ENCODE measurements at regions of chr3 and their contacts with region 1.

Region 1: GRCh38 chr3:109023656-109024254 is 70.1 kb upstream of the GUCA1C start:
- DNase-seq: peak; percentile 36 to 47
- H3K4me3 ChIP-seq: no peak overlapping the region
- H3K4me3 Mint-ChIP-seq: no peak overlapping the region
- H3K27ac Mint-ChIP-seq: no peak overlapping the region
- H3K4me1 ChIP-seq: no peaks in the 10 kb centered on the region
- H3K4me1 Mint-ChIP-seq: no peaks in the 10 kb centered on the region
- H3K27me3 ChIP-seq: no peaks in the 10 kb centered on the region
- H3K27me3 Mint-ChIP-seq: no peaks in the 10 kb centered on the region
- CTCF ChIP-seq: peak; percentile 70 to 73

Region 2: DNA sequence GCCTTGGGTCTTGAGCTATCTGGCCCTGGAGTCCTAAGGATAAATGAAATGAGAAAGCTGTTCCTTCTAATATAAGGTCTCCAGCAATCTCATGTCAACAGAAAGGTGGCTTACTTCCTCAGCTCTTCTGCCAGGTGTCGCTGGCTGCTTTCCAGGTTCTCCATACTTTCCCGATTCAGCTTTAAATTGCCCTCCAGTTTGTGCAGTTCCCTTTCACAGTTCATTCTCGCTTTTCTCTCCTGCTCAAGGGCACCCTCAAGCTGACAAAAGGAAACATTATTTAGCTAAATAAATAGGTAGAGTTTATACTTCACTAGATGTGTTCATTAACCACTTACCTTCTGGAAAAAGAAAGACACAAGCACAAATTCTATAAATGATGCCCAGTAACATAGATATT is 586.3 kb before region 1 on chr3:
- CTCF ChIA-PET with region 1: no interaction called
- POLR2A ChIA-PET with region 1: no interaction called
- intact Hi-C with region 1: no loop called
- DNase-seq: peak in 1 of 2 experiments; percentile 9
- H3K4me3 ChIP-seq: no peak overlapping the region
- H3K4me3 Mint-ChIP-seq: no peak overlapping the region
- H3K27ac Mint-ChIP-seq: no peak overlapping the region
- H3K4me1 ChIP-seq: no peaks in the 10 kb centered on the region
- H3K4me1 Mint-ChIP-seq: no peaks in the 10 kb centered on the region
- H3K27me3 ChIP-seq: no peaks in the 10 kb centered on the region
- H3K27me3 Mint-ChIP-seq: no peaks in the 10 kb centered on the region
- CTCF ChIP-seq: no peak

Region 3: GRCh38 chr3:109071350-109072142 is 47.8 kb after region 1 on chr3:
- CTCF ChIA-PET with region 1: interaction called, 15 read pairs
- POLR2A ChIA-PET with region 1: no interaction called
- intact Hi-C with region 1: loop called (anchors 1 kb)
- DNase-seq: peak in 1 of 2 experiments; percentile 6
- H3K4me3 ChIP-seq: no peak overlapping the region
- H3K4me3 Mint-ChIP-seq: no peak overlapping the region
- H3K27ac Mint-ChIP-seq: no peak overlapping the region
- H3K4me1 ChIP-seq: no peaks in the 10 kb centered on the region
- H3K4me1 Mint-ChIP-seq: no peaks in the 10 kb centered on the region
- H3K27me3 ChIP-seq: no peaks in the 10 kb centered on the region
- H3K27me3 Mint-ChIP-seq: peaks cover 4% of the 10 kb centered on the region
- CTCF ChIP-seq: peak in 1 of 2 experiments; percentile 9

Region 4: GRCh38 chr3:109081746-109082510 is 58.2 kb after region 1 on chr3:
- CTCF ChIA-PET with region 1: interaction called, 3 read pairs
- POLR2A ChIA-PET with region 1: no interaction called
- intact Hi-C with region 1: loop called (anchors 1 kb)
- DNase-seq: peak; percentile 36 to 47
- H3K4me3 ChIP-seq: no peak overlapping the region
- H3K4me3 Mint-ChIP-seq: no peak overlapping the region
- H3K27ac Mint-ChIP-seq: no peak overlapping the region
- H3K4me1 ChIP-seq: no peaks in the 10 kb centered on the region
- H3K4me1 Mint-ChIP-seq: no peaks in the 10 kb centered on the region
- H3K27me3 ChIP-seq: no peaks in the 10 kb centered on the region
- H3K27me3 Mint-ChIP-seq: peaks cover 19% of the 10 kb centered on the region
- CTCF ChIP-seq: peak; percentile 67 to 69

Region 5: GRCh38 chr3:109098079-109098644 is 74.4 kb after region 1 on chr3:
- CTCF ChIA-PET with region 1: interaction called, 12 read pairs
- POLR2A ChIA-PET with region 1: no interaction called
- intact Hi-C with region 1: no loop called
- DNase-seq: peak; percentile 49 to 57
- H3K4me3 ChIP-seq: no peak overlapping the region
- H3K4me3 Mint-ChIP-seq: no peak overlapping the region
- H3K27ac Mint-ChIP-seq: no peak overlapping the region
- H3K4me1 ChIP-seq: no peaks in the 10 kb centered on the region; the same call in 1 of the 2 replicates
- H3K4me1 Mint-ChIP-seq: no peaks in the 10 kb centered on the region
- H3K27me3 ChIP-seq: no peaks in the 10 kb centered on the region
- H3K27me3 Mint-ChIP-seq: no peaks in the 10 kb centered on the region
- CTCF ChIP-seq: peak; percentile 27 to 63

Region 6: GRCh38 chr3:109224333-109224732 is 200.6 kb after region 1 on chr3:
- CTCF ChIA-PET with region 1: interaction called, 27 read pairs
- POLR2A ChIA-PET with region 1: no interaction called
- intact Hi-C with region 1: loop called (anchors 1 kb)
- DNase-seq: peak; percentile 54 to 56
- H3K4me3 ChIP-seq: no peak overlapping the region
- H3K4me3 Mint-ChIP-seq: no peak overlapping the region
- H3K27ac Mint-ChIP-seq: no peak overlapping the region
- H3K4me1 ChIP-seq: no peaks in the 10 kb centered on the region
- H3K4me1 Mint-ChIP-seq: no peaks in the 10 kb centered on the region
- H3K27me3 ChIP-seq: no peaks in the 10 kb centered on the region
- H3K27me3 Mint-ChIP-seq: no peaks in the 10 kb centered on the region
- CTCF ChIP-seq: peak; percentile 38 to 55

Region 7: GRCh38 chr3:109396806-109397205 is 373.1 kb after region 1 on chr3:
- CTCF ChIA-PET with region 1: interaction called, 4 read pairs
- POLR2A ChIA-PET with region 1: no interaction called
- intact Hi-C with region 1: loop called (anchors 1 kb)
- DNase-seq: peak in 1 of 2 experiments; percentile 30
- H3K4me3 ChIP-seq: no peak overlapping the region
- H3K4me3 Mint-ChIP-seq: no peak overlapping the region
- H3K27ac Mint-ChIP-seq: peak overlapping the region; percentile 30
- H3K4me1 ChIP-seq: peaks cover 8% of the 10 kb centered on the region
- H3K4me1 Mint-ChIP-seq: no peaks in the 10 kb centered on the region
- H3K27me3 ChIP-seq: no peaks in the 10 kb centered on the region
- H3K27me3 Mint-ChIP-seq: no peaks in the 10 kb centered on the region
- CTCF ChIP-seq: no peak